ENCODE measurements at regions of chr3 and their contacts with region 1.

Region 1: GRCh38 chr3:190424478-190425439 is 24.9 kb downstream of the TMEM207 start:
- DNase-seq: peak in 4 of 9 experiments; percentile 1 to 59 (median 34)
- ATAC-seq: peak; percentile 31
- H3K4me3 ChIP-seq: no peak overlapping the region
- H3K4me3 Mint-ChIP-seq: no peak overlapping the region
- H3K27ac ChIP-seq: no peak overlapping the region
- H3K27ac Mint-ChIP-seq: peak overlapping the region; percentile 37
- H3K4me1 ChIP-seq: no peaks in the 10 kb centered on the region
- H3K4me1 Mint-ChIP-seq: peaks cover 5% of the 10 kb centered on the region
- H3K27me3 ChIP-seq: no peaks in the 10 kb centered on the region
- H3K27me3 Mint-ChIP-seq: no peaks in the 10 kb centered on the region
- CTCF ChIP-seq: peak; percentile 53

Region 2: GRCh38 chr3:189967254-189967865 is 457.4 kb before region 1 on chr3:
- CTCF ChIA-PET with region 1: interaction called, 4 read pairs
- POLR2A ChIA-PET with region 1: no interaction called
- intact Hi-C with region 1: loop called (anchors 2 to 5 kb)
- DNase-seq: peak in 3 of 9 experiments; percentile 13 to 61 (median 45)
- ATAC-seq: no peak
- H3K4me3 ChIP-seq: no peak overlapping the region
- H3K4me3 Mint-ChIP-seq: no peak overlapping the region
- H3K27ac ChIP-seq: no peak overlapping the region
- H3K27ac Mint-ChIP-seq: no peak overlapping the region
- H3K4me1 ChIP-seq: no peaks in the 10 kb centered on the region
- H3K4me1 Mint-ChIP-seq: no peaks in the 10 kb centered on the region
- H3K27me3 ChIP-seq: no peaks in the 10 kb centered on the region
- H3K27me3 Mint-ChIP-seq: peaks cover 9% of the 10 kb centered on the region
- CTCF ChIP-seq: peak; percentile 92

Region 3: DNA sequence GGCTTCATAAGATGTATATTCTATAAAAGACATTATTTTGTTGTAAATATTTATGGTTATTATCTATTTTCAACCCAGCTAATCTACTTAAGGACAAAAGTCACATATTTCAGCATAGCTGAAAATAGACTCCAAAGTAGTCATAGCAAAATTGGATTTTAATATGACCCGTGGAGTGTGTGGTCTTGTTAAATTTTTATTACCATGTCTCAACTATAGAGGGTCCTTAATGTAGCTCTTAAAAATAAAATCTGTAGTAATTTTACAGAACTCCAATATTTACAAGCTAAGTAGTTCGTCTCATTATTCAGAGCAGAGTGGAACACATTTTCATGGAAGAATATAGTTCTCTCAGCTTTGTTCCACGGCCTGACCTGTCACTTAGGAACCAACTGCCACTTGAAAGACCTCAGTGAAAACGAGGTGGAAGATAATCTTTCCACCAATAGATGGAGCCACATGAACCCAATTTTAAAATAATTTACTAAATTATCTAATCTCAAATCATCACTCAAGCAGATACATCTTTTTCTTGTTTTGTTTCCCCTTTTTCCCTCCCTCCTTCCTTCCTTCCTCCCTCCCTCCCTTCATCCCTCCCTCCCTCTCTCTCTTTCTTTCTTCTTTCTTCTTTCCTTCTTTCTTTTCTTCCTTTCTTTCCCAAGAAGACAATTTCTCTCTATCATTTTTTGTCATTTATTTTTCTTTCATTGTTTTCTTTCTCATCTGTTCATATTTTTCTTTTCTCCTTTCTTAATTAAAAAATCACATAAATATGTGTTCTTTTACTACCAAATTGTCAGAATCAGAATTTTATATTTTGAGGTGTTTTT is 199.7 kb before region 1 on chr3:
- CTCF ChIA-PET with region 1: interaction called, 3 read pairs
- POLR2A ChIA-PET with region 1: no interaction called
- intact Hi-C with region 1: loop called in 1 of 2 experiments (anchors 5 kb)
- DNase-seq: peak in 2 of 9 experiments; percentile 4 to 44
- ATAC-seq: no peak
- H3K4me3 ChIP-seq: no peak overlapping the region
- H3K4me3 Mint-ChIP-seq: no peak overlapping the region
- H3K27ac ChIP-seq: no peak overlapping the region
- H3K27ac Mint-ChIP-seq: no peak overlapping the region
- H3K4me1 ChIP-seq: no peaks in the 10 kb centered on the region
- H3K4me1 Mint-ChIP-seq: no peaks in the 10 kb centered on the region
- H3K27me3 ChIP-seq: no peaks in the 10 kb centered on the region
- H3K27me3 Mint-ChIP-seq: peaks cover 7% of the 10 kb centered on the region
- CTCF ChIP-seq: peak; percentile 47

Region 4: GRCh38 chr3:190414297-190414696 is 10.5 kb before region 1 on chr3:
- CTCF ChIA-PET with region 1: interaction called, 11 read pairs
- POLR2A ChIA-PET with region 1: no interaction called
- intact Hi-C with region 1: no loop called
- DNase-seq: no peak
- ATAC-seq: no peak
- H3K4me3 ChIP-seq: no peak overlapping the region
- H3K4me3 Mint-ChIP-seq: no peak overlapping the region
- H3K27ac ChIP-seq: no peak overlapping the region
- H3K27ac Mint-ChIP-seq: no peak overlapping the region
- H3K4me1 ChIP-seq: no peaks in the 10 kb centered on the region
- H3K4me1 Mint-ChIP-seq: no peaks in the 10 kb centered on the region
- H3K27me3 ChIP-seq: no peaks in the 10 kb centered on the region
- H3K27me3 Mint-ChIP-seq: peaks cover 3% of the 10 kb centered on the region
- CTCF ChIP-seq: no peak

Region 5: GRCh38 chr3:190443257-190443656 is 18.5 kb after region 1 on chr3:
- CTCF ChIA-PET with region 1: no interaction called
- POLR2A ChIA-PET with region 1: no interaction called
- intact Hi-C with region 1: no loop called
- DNase-seq: no peak
- ATAC-seq: no peak
- H3K4me3 ChIP-seq: no peak overlapping the region
- H3K4me3 Mint-ChIP-seq: no peak overlapping the region
- H3K27ac ChIP-seq: no peak overlapping the region
- H3K27ac Mint-ChIP-seq: no peak overlapping the region
- H3K4me1 ChIP-seq: no peaks in the 10 kb centered on the region
- H3K4me1 Mint-ChIP-seq: peaks cover 8% of the 10 kb centered on the region
- H3K27me3 ChIP-seq: no peaks in the 10 kb centered on the region
- H3K27me3 Mint-ChIP-seq: peaks cover 13% of the 10 kb centered on the region
- CTCF ChIP-seq: no peak